ENCODE measurements at regions of chrX and their contacts with region 1.

Region 1: GRCh38 chrX:49053223-49054072 is 5.4 kb upstream of the CCDC120 start:
- DNase-seq: no peak
- H3K27ac ChIP-seq: peak overlapping the region; percentile 74
- CTCF ChIP-seq: no peak

Region 2: GRCh38 chrX:47560831-47561652 is 1492.4 kb before region 1 on chrX and contains the start of gene ARAF:
- CTCF ChIA-PET with region 1: no interaction called
- POLR2A ChIA-PET with region 1: no interaction called
- DNase-seq: peak; percentile 96
- H3K27ac ChIP-seq: peak within 1 kb of the TSS; percentile 88
- CTCF ChIP-seq: no peak

Region 3: DNA sequence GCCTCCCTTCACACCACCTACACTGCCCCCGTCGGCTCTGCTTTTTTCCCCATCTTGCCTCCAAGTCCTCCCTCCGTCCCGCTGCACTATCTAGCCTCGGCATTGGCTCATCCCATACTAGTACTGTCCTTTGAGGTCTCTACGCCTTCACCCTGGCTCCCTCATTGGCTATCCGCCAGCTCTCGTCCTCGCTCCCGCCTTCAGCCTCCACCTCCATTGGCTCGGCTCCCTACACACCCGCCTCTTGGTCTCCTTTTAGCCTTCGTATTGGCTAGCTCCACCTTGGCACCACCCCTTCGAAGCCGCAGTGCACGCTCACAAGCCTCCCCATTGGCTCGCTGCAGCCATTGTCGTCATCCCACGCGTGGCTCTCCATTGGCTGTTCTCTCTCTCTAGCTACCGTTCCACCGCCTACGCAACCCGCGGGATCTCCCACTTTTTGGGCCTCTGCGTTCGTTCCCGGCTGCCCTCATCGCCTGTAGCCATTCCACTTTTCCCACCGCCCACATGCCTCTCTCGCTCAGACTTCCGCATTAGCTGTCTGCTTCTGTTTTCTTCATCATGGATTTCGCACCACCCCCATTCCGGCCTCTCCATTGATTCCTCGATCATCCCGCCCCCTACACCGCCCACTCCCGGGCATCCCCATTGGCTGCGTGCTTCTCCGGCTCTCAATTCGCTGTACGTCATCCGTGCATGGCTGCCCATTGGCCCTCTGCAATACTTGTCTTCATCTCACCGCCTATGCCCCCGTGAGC is 215.7 kb after region 1 on chrX:
- CTCF ChIA-PET with region 1: no interaction called
- POLR2A ChIA-PET with region 1: interaction called, 15 read pairs
- DNase-seq: peak; percentile 91
- H3K27ac ChIP-seq: peak overlapping the region; percentile 88
- CTCF ChIP-seq: no peak